Endothelial cell of umbilical vein (primary cell): ENCODE measurements at regions of chr12 and their contacts with region 1.

Region 1: DNA sequence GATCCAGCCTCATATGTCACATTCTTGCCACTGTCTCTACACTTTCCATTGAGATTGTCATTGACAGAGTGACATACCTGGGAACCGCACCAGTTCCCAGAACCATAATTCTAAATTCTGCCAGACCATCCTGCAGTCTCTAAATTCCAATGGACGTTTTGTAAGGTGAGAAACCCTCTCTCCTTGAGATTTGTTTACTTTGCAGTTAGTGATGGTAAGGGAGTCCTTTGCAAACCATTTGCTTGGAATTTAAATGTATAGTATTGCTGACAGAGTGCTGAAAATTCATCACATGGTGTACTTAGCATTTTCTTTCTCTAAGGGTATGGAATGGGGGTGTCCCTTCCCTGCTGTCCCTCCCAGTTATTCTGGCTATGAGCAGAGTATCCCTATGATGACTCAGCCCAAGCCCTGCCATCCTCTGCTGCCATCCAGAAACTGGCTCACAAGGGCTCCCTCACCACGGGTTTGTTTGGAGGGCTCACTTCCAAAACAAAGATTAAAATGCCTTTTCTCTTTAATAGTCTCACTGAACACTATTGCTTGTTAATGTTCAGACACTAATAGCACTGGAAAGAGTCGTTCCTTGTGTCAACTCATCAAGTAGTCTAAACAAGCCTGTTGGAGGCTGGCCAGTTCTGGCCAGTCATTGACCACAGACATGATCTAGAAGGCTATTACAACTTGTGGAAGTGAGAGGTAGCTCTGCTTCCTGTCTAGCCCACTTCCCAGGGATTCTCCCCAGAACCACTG is 129.0 kb upstream of the HMGA2 start:
- DNase-seq: peak; percentile 94
- H3K4me3 ChIP-seq: no peak overlapping the region
- H3K27ac ChIP-seq: peak overlapping the region; percentile 88
- H3K4me1 ChIP-seq: peaks cover 31% of the 10 kb centered on the region
- H3K27me3 ChIP-seq: no peaks in the 10 kb centered on the region
- CTCF ChIP-seq: no peak
- POLR2A ChIP-seq: peak; percentile 35

Region 2: GRCh38 chr12:65182012-65182739 is 513.1 kb before region 1 on chr12:
- CTCF ChIA-PET with region 1: no interaction called
- POLR2A ChIA-PET with region 1: no interaction called
- dilution Hi-C with region 1: no loop called
- intact Hi-C with region 1: no loop called
- DNase-seq: no peak
- H3K4me3 ChIP-seq: no peak overlapping the region
- H3K27ac ChIP-seq: no peak overlapping the region
- H3K4me1 ChIP-seq: no peaks in the 10 kb centered on the region
- H3K27me3 ChIP-seq: no peaks in the 10 kb centered on the region
- CTCF ChIP-seq: no peak
- POLR2A ChIP-seq: no peak

Region 3: DNA sequence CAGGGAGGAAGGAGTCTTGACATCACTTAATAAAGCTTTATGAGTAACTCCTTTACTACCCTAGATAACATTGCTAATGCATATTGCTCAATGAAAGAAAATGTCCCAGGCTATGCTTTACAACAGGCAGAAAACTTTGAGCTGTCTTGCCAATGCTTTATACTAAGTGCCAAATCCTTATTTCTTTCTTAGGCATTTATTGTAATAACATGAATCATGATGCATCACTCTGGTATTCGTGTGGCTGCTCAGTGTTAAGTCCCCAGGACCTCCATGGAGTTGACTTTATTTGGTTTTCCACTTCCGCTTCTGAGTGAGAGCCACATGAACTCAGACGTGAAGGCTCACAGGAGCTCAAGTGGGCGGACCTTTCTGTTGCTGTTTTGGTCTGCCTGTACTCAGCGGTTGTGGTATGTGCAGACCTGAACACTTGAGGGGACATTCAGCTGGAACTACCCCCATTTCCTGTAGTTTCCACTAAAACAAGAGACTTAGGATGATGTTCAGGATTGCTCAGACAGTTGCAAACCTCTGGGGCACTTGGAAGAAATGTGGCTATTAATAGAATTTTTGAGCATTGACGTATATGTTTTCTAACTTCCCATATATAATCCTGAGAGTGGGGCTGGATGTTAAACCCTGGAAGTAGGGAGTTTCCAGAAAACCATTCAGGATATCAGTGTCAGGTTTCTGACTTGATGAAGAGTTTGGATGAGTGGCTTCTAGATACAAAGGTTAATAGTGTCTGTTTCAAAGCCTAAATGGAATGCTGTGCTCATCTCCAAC is 158.2 kb before region 1 on chr12:
- CTCF ChIA-PET with region 1: interaction called, 3 read pairs
- POLR2A ChIA-PET with region 1: no interaction called
- dilution Hi-C with region 1: no loop called
- intact Hi-C with region 1: loop called (anchors 1 kb)
- DNase-seq: peak; percentile 94
- H3K4me3 ChIP-seq: no peak overlapping the region
- H3K27ac ChIP-seq: peak overlapping the region; percentile 98
- H3K4me1 ChIP-seq: peaks cover 58% of the 10 kb centered on the region
- H3K27me3 ChIP-seq: no peaks in the 10 kb centered on the region
- CTCF ChIP-seq: no peak
- POLR2A ChIP-seq: peak; percentile 45

Region 4: DNA sequence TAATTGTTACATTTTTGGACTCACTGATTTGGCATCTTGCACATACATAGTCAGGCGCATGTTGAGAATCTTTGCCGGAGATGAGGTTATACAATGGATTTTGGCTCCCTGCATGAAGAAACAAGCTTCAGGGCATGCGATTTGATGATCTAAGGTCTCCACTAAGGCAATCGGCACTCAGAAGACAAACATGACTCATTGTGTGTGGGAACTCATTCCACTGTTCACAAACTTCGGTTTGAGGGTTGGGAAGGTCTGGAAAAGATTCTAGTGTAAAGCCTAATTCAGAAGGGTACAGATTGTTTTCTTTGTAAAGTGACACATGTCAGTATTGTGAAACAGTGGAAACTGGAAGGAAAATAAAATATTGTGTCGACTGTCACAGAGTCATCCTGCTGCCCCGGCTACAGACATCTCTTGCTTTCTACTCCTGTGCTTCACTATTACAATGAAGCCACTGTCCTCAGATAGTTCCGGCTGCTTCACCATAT is 63.6 kb before region 1 on chr12:
- CTCF ChIA-PET with region 1: interaction called, 5 read pairs
- POLR2A ChIA-PET with region 1: no interaction called
- dilution Hi-C with region 1: no loop called
- intact Hi-C with region 1: loop called (anchors 2 kb)
- DNase-seq: peak; percentile 94
- H3K4me3 ChIP-seq: no peak overlapping the region
- H3K27ac ChIP-seq: peak overlapping the region; percentile 87
- H3K4me1 ChIP-seq: peaks cover 56% of the 10 kb centered on the region
- H3K27me3 ChIP-seq: no peaks in the 10 kb centered on the region
- CTCF ChIP-seq: no peak
- POLR2A ChIP-seq: peak; percentile 49

Region 5: GRCh38 chr12:65649126-65649525 is 46.2 kb before region 1 on chr12:
- CTCF ChIA-PET with region 1: interaction called, 3 read pairs
- POLR2A ChIA-PET with region 1: no interaction called
- dilution Hi-C with region 1: no loop called
- intact Hi-C with region 1: loop called (anchors 2 kb)
- DNase-seq: peak; percentile 98
- H3K4me3 ChIP-seq: no peak overlapping the region
- H3K27ac ChIP-seq: peak overlapping the region; percentile 95
- H3K4me1 ChIP-seq: peaks cover 38% of the 10 kb centered on the region
- H3K27me3 ChIP-seq: no peaks in the 10 kb centered on the region
- CTCF ChIP-seq: no peak
- POLR2A ChIP-seq: no peak

Region 6: DNA sequence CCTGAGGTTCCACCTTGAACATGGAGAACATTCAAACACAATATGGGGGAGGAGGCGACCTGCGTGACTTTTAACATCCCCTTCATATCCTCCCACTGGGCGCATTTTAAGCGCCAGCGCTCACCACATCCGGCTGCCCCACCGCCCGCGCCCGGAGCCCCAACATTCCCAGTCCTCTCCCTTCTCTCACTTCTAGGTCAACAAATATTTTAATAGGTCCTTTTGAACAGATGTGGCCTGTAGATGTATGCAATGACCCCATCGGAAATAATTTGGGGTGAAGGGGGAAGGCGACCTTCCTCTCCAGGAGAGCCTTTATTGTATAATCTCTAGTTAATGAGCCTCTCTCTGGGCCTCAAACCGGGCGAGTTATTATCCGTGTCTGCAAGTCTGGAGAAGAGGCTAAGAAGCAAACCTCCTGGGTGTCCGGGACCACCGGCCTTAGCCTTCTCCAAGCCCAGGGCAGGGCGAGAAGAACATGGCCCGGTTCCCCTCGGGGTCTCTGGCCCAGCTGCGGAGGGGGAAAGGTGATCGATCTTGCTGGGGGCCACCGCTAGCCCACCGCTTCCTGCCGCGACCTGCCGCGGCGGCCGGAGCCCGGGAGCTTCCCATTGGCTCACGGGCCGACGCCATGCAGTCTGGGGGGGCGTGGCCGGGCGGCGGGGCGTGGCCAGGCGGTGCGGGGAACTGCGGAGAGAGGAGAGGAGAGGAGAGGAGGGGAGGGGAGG is 45.7 kb after region 1 on chr12:
- CTCF ChIA-PET with region 1: interaction called, 6 read pairs
- POLR2A ChIA-PET with region 1: no interaction called
- dilution Hi-C with region 1: no loop called
- intact Hi-C with region 1: loop called (anchors 2 kb)
- DNase-seq: peak; percentile 82
- H3K4me3 ChIP-seq: peak overlapping the region; percentile 75 to 88 (median 81)
- H3K27ac ChIP-seq: peak overlapping the region; percentile 77
- H3K4me1 ChIP-seq: peaks cover 5% of the 10 kb centered on the region
- H3K27me3 ChIP-seq: no peaks in the 10 kb centered on the region
- CTCF ChIP-seq: no peak
- POLR2A ChIP-seq: no peak

Region 7: DNA sequence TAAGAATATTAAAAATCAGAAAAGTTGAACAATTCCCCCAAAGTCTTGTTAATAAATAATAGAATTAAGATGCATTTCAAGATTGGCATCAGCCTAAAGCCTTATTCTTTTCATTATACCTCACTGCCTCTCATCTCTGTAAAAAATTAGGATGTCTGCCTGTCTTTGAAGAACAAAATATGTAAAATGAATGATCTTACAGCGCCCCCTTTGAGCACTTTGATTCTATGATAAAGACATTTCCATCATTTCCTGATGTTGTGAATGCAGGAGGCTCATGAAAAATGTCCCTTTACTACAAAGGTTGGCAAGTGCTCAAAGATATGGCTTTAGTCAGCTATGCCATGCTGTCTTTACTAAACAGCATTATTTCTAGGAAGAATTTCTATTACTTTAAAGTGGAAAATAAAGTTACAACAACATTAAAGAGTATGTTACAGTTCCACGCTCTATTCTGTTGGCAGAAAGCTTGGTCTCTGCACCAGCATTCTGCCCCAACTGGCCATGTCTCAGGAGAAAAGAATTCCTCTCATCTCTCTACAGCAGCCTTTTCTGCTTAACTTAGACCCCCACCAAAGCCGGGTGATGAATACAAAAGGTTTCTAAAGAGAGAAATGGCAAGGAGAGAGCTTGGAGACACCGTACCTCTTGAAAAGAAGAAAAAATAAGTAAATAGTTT is 340.1 kb after region 1 on chr12:
- CTCF ChIA-PET with region 1: interaction called, 4 read pairs
- POLR2A ChIA-PET with region 1: no interaction called
- dilution Hi-C with region 1: no loop called
- intact Hi-C with region 1: loop called (anchors 5 kb)
- DNase-seq: peak; percentile 71
- H3K4me3 ChIP-seq: no peak overlapping the region
- H3K27ac ChIP-seq: no peak overlapping the region
- H3K4me1 ChIP-seq: peaks cover 10% of the 10 kb centered on the region
- H3K27me3 ChIP-seq: peaks cover 1 to 3% of the 10 kb centered on the region in 2 experiments
- CTCF ChIP-seq: peak; percentile 26 to 35
- POLR2A ChIP-seq: no peak